ENCODE measurements at regions of chr10 and their contacts with region 1.

Region 1: DNA sequence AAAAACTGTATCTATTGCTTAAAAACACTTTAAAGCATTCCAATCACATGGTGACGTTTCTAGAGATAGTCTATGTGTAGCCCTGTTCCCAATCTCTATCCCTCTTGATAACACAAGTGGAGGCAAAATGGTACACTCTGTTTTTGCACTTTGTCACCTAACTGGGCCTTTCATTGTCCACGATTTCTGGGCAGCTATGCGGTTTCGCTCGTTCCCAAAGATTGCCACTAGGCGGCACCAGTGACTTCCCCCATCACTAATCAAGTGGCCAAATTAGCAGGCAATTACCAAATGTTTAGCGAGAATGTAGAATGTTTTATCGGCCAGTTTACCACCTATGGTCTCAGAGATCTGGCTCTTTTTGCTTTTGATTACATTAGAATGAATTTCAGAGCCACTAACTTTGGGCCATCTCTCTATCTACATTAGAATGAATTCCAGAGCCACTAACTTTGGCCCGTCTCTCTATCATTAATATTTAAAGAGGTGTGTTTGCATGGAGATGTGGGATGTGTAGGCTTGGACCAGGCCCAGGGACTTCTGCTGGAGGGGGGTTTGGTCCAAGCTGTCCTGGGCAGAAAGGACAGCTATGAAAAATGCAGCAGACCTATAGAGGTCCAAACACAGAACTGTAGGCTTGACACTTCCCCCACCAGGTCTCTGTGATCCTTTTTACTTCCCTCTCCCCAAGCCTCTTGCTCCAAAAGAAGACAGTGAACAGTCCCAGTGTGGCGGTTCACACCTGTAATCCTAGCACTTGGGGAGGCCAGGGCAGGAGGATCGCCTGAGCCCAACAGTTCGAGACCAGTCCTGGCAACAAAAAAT is 90.1 kb downstream of the EPC1 start:
- DNase-seq: peak; percentile 79
- CTCF ChIP-seq: peak; percentile 90

Region 2: DNA sequence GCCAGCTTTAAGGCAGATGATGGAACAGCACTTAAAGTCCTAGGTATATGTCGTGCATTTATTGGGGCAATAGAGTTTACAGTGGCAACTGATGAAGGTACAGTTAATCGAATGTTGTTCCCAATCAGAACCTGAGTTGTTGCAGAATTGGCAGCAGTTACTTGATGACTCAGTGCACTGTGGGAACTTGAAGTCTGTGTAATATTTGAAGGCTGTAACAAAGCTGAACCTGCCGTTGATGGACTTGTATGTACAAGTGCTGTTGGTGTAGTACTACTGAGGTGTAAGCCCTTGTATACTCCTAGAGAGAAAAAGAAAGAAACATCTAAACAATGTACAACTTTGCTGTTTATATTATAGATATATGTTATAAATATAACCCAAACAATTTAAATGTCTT is 14.8 kb after region 1 on chr10:
- CTCF ChIA-PET with region 1: interaction called, 14 read pairs
- POLR2A ChIA-PET with region 1: interaction called, 4 read pairs
- DNase-seq: no peak
- CTCF ChIP-seq: no peak

Region 3: GRCh38 chr10:32338262-32338661 is 81.4 kb after region 1 on chr10:
- CTCF ChIA-PET with region 1: interaction called, 19 read pairs
- POLR2A ChIA-PET with region 1: no interaction called
- DNase-seq: no peak
- CTCF ChIP-seq: no peak

Region 4: DNA sequence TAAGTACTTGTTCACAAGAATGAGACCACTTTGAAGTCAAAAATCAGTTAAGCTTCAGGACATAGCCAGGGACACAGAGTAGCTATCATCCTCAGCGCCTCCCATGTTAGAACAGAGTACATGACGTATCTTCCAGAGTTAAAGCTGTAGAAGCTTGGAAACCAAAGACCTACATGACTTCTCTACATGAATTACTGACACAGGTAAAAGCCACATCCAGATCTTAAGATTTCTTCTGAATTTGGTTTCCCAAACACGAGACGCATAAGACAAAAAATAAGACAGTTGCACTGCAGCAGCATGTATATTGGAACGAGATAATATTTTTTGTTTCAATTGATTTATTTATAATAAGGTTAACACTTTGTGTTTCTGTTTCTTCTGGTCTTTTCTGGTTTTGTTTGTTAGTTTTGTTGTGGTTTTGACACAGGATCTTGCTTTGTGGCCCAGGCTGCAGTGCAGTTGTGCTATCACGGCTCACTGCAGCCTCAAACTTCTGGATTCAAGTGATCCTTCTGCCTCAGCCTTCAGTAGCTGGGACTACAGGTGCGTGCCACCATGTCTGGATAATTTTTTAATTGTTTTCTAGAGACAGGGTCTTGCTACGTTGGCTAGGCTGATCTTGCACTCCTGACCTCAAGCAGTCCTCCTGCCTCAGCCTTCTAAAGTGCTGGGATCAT is 100.4 kb after region 1 on chr10:
- CTCF ChIA-PET with region 1: interaction called, 12 read pairs
- POLR2A ChIA-PET with region 1: interaction called, 3 read pairs
- DNase-seq: no peak
- CTCF ChIP-seq: no peak

Region 5: DNA sequence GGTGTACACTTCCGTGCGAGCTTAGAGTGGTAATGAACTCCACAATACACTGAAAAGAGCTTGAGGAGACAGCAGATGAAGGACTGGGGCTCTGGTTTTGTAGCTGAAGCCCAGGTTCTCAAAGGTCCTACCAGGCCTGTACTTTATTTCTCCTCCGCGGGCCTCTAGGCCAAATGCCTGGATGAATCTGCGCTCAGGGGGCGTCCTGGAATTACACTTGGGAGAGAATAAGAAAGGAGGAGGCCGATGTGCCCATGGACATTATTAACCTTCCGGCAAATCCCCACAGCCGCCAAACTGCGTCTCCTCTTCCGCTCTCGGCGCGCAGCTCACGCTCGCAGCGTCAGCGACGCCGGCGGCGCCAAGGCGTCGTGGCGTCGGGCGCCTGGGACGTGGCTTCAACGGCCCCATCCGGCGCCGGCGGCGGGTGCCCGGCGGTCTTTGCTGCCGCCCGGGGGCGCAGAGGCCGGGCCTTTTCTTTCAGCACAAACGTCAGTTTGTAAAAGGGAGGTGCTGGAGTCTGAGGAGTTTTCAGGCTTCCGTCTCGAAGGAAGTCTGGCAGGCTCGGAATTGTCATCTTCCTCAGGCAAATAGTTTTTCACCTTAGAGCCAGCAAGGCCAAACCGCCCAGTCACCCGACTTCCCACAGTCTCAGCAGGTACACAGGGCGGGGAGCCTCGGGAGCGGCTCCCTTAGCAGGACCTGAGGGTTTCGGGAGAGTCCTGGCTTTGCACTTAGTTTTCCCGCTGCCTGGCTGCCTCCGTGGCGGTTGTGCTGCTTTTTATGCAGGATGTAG is 189.1 kb after region 1 on chr10 and contains the start of gene CCDC7:
- CTCF ChIA-PET with region 1: no interaction called
- POLR2A ChIA-PET with region 1: no interaction called
- DNase-seq: peak; percentile 89
- CTCF ChIP-seq: peak; percentile 62

Measured in GM10248 (cell line).